T-cell (primary cell): ENCODE measurements at regions of chr17 and their contacts with region 1.

Region 1: DNA sequence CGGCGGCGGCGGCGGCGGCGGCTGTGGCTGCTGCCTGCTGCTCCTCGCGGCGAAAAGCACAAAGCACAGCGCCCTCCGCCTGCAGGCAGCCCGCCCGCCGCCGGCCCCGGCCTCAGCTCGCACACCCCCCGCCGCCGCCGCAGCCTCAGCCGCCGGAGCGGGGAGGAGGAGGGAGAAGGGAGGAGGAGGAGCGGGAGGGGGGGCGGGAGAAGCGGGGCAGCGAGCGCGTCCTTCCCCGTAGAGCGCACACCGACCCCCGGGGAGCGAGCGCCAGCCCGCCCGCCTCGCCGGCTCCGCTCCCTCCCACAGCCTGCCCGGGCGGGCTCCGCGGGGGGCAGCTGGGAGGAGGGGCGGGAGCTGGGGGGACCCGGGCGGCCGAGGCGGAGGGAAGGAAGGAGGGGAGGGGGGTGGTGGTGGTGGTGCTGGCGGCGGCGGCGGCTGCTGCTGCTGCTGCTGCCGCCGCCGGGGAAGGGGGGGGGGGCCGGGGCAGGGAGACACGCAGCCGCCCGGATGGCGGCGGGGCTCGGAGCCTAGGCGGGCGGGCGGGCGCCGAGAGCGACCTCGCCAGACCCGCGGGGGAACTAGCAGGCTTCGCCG is at the start of gene UBTF:
- DNase-seq: peak; percentile 43 to 82 (median 71)
- ATAC-seq: peak; percentile 36 to 46 (median 40)
- H3K4me3 ChIP-seq: peak within 1 kb of the TSS; percentile 71 to 86
- H3K4me3 Mint-ChIP-seq: peak within 1 kb of the TSS; percentile 89 to 98 (median 91)
- H3K27ac ChIP-seq: peak within 1 kb of the TSS; percentile 75
- H3K27ac Mint-ChIP-seq: peak within 1 kb of the TSS; percentile 87 to 95
- H3K4me1 ChIP-seq: peaks cover 28 to 46% of the 10 kb centered on the region in 2 experiments
- H3K4me1 Mint-ChIP-seq: peaks cover 40 to 41% (median 41%) of the 10 kb centered on the region in 3 donors
- H3K27me3 ChIP-seq: no peaks in the 10 kb centered on the region
- H3K27me3 Mint-ChIP-seq: peaks cover 0 to 1% of the 10 kb centered on the region in 2 donors
- total RNA-seq, gene UBTF: 162 to 228 (median 213) TPM

Region 2: DNA sequence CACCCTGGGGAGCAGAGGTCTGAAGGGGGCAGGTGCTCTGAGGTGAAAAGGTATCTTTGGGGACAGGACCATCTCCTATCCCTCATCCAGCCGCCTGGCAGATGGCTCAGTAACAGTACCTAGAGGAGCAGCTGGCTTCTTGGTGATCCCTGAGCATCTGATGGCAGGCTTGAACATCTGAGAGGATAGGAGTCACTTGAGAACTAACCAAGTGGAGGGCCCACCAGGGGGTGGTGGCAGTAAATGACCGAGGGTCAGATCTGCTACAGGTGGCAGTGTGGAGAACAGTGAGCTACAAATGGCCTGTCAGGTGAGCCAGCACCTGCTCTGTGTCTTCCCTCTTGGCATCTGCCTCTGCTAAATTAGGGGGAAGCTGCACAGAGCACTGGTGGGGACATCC is 64.2 kb before region 1 on chr17:
- CTCF ChIA-PET with region 1: no interaction called
- POLR2A ChIA-PET with region 1: no interaction called
- DNase-seq: no peak
- ATAC-seq: no peak
- H3K4me3 ChIP-seq: no peak overlapping the region
- H3K4me3 Mint-ChIP-seq: no peak overlapping the region
- H3K27ac ChIP-seq: no peak overlapping the region
- H3K27ac Mint-ChIP-seq: no peak overlapping the region
- H3K4me1 ChIP-seq: peaks cover 0 to 2% of the 10 kb centered on the region in 2 experiments
- H3K4me1 Mint-ChIP-seq: peaks cover 0 to 6% (median 5%) of the 10 kb centered on the region in 3 donors
- H3K27me3 ChIP-seq: peaks cover 0 to 2% of the 10 kb centered on the region in 2 experiments
- H3K27me3 Mint-ChIP-seq: no peaks in the 10 kb centered on the region

Region 3: GRCh38 chr17:44199553-44200477 is 19.9 kb before region 1 on chr17 and contains the start of gene ATXN7L3:
- CTCF ChIA-PET with region 1: interaction called in 1 of 2 experiments, 6 read pairs
- POLR2A ChIA-PET with region 1: interaction called in 1 of 2 experiments, 16 read pairs
- DNase-seq: peak; percentile 96 to 100 (median 99)
- ATAC-seq: peak; percentile 81 to 86 (median 82)
- H3K4me3 ChIP-seq: peak within 1 kb of the TSS; percentile 84 to 86
- H3K4me3 Mint-ChIP-seq: peak within 1 kb of the TSS; percentile 83 to 93 (median 88)
- H3K27ac ChIP-seq: peak within 1 kb of the TSS; percentile 87
- H3K27ac Mint-ChIP-seq: peak within 1 kb of the TSS; percentile 89 to 95
- H3K4me1 ChIP-seq: peaks cover 18 to 48% of the 10 kb centered on the region in 2 experiments
- H3K4me1 Mint-ChIP-seq: peaks cover 39 to 54% (median 48%) of the 10 kb centered on the region in 3 donors
- H3K27me3 ChIP-seq: no peaks in the 10 kb centered on the region
- H3K27me3 Mint-ChIP-seq: no peaks in the 10 kb centered on the region
- total RNA-seq, gene ATXN7L3: 101 to 130 (median 125) TPM

Region 4: DNA sequence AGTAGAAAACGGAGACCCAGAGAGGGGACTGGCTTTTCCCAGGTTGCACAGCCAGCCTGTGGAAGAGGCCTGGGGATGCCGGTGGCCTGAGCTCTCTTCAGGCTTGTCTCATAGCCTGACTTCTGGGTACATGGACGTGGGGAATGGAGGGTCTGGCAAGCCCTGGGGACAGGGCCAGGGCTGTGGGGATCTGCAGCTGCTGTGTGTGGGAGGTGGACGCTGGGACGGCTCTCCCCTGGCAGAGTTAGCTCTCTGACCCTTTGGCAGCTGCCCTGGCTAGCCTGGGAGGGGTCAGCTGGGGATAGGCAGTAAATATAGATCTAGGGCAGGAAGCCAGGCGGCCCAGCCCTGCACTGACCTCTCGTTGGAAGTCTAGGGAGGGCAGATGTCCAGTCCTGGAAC is 27.7 kb after region 1 on chr17:
- CTCF ChIA-PET with region 1: interaction called in 1 of 2 experiments, 11 read pairs
- POLR2A ChIA-PET with region 1: no interaction called
- DNase-seq: no peak
- ATAC-seq: no peak
- H3K4me3 ChIP-seq: no peak overlapping the region
- H3K4me3 Mint-ChIP-seq: peak overlapping the region in 1 of 3 donors; percentile 48
- H3K27ac ChIP-seq: no peak overlapping the region
- H3K27ac Mint-ChIP-seq: peak overlapping the region; percentile 15 to 79
- H3K4me1 ChIP-seq: peaks cover 12 to 43% of the 10 kb centered on the region in 2 experiments
- H3K4me1 Mint-ChIP-seq: peaks cover 36 to 49% (median 42%) of the 10 kb centered on the region in 3 donors
- H3K27me3 ChIP-seq: no peaks in the 10 kb centered on the region
- H3K27me3 Mint-ChIP-seq: no peaks in the 10 kb centered on the region